Vagina (tissue), 2 donors: ENCODE measurements at regions of chr17 and their contacts with region 1.

Region 1: DNA sequence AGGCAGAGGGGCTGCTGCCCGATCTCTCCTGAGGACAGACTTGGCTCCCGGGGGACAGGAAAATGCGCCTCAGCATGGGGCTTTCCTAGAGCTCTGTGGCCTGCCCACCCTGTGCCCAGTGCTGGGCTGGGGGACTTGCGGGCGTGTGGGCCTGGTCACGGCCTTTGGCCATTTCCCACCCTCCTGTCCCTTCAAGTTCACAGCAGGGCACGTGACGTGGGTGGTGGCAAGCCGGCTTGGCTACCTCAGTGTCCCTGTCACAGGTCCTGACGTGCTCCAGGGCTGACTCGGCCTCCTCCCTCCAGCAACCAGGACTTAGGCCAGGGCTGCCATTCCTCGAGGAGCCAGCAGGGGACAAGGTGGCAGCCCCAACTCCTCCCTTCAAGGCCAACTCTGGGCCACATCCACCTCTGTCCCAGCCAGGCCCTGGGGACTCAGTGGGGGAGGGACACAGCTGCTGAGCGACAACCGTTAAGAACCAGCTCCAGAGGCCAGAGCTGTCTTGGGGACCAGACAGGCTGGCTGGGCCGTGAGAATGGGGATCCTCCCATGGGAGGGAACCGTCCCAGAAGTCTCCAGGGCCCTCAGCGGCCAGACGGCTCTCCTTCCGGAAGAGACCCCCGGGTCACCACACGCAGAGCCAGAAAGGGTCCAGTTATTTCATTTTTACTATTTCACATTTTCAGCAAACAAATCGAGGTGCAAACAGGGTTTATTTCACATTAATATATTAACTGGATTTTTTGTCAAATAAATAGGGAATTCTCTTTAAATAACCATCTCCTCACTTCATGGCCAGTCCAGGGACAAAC is 1.1 kb upstream of the UNC13D start:
- DNase-seq: no peak
- H3K4me3 ChIP-seq: peak overlapping the region in 1 of 2 donors; percentile 11
- H3K27ac ChIP-seq: peak overlapping the region; percentile 93
- H3K4me1 ChIP-seq: peaks cover 56% of the 10 kb centered on the region
- H3K27me3 ChIP-seq: no peaks in the 10 kb centered on the region
- CTCF ChIP-seq: peak; percentile 33 to 61 (median 59)
- POLR2A ChIP-seq: no peak

Region 2: DNA sequence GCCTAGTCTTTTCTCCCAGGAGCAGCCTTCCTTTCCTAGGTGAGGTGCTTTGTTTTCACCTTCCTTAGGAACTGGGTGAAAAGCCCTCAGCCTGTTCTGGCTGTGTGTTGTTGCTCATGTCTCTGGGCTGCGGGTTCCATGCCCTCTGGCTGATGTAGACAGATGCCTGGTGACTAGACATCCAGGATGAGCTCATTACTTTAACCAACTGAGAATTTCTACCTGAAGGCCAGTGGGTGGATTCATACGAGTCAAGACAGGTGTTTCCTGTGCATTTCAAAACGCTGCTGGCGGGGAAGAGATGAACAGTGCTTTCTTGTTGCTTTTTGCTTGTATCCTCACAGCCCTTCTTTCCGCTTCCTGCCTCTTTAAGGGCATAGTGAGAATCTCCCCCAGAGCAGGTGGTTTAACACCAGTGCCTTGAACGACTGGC is 155.8 kb before region 1 on chr17:
- intact Hi-C with region 1: no loop called
- DNase-seq: peak in 1 of 2 donors; percentile 85
- H3K4me3 ChIP-seq: no peak overlapping the region
- H3K27ac ChIP-seq: peak overlapping the region; percentile 72
- H3K4me1 ChIP-seq: peaks cover 98% of the 10 kb centered on the region
- H3K27me3 ChIP-seq: no peaks in the 10 kb centered on the region
- CTCF ChIP-seq: no peak
- POLR2A ChIP-seq: no peak

Region 3: GRCh38 chr17:75779231-75779986 is 65.8 kb before region 1 on chr17:
- intact Hi-C with region 1: loop called (anchors 5 kb)
- DNase-seq: peak in 1 of 2 donors; percentile 100
- H3K4me3 ChIP-seq: peak overlapping the region; percentile 77 to 93
- H3K27ac ChIP-seq: peak overlapping the region; percentile 99
- H3K4me1 ChIP-seq: peaks cover 71% of the 10 kb centered on the region
- H3K27me3 ChIP-seq: no peaks in the 10 kb centered on the region
- CTCF ChIP-seq: peak in 2 of 3 experiments; percentile 9 to 21
- POLR2A ChIP-seq: peak; percentile 99 to 100

Region 4: DNA sequence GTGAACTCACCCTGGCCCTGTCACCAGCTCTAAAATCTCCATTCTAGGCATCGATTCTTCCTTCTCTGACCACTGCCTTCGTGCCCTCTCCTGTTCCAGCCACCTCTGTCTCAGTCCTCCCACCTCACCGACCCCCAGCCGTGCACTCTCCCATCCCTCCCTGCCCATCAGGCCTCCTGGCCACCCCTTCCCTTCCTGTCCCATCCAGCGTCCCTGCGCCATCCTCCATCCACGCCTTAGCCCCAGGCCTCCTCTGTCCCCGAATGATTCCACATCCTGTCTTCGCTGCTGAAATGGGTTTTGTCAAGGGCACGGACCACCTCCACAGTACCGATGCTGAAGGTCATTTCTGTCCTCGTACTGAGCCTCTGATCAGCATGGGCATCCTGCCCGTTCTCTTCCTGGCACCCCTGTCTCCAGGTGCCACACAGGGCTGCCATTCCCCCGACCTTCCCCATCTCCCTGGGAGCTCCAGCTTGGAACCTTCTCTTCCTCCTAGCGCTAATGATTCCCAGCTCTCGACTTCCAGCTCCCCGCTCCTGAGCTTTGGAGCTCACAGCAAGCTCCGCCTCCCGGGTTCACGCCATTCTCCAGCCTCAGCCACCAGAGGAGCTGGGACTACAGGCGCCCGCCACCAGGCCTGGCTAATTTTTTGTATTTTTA is 48.9 kb after region 1 on chr17:
- intact Hi-C with region 1: loop called (anchors 5 kb)
- DNase-seq: no peak
- H3K4me3 ChIP-seq: peak overlapping the region in 1 of 2 donors; percentile 87
- H3K27ac ChIP-seq: peak overlapping the region; percentile 94
- H3K4me1 ChIP-seq: peaks cover 50% of the 10 kb centered on the region
- H3K27me3 ChIP-seq: no peaks in the 10 kb centered on the region
- CTCF ChIP-seq: no peak
- POLR2A ChIP-seq: no peak